CD14-positive monocyte (primary cell): ENCODE measurements at regions of chr16 and their contacts with region 1.

Region 1: GRCh38 chr16:28140788-28141618 is 70.8 kb downstream of the XPO6 start:
- DNase-seq: peak; percentile 72 to 81 (median 80)
- H3K4me3 ChIP-seq: no peak overlapping the region
- H3K4me3 Mint-ChIP-seq: peak overlapping the region; percentile 41 to 48
- H3K27ac ChIP-seq: peak overlapping the region; percentile 81 to 84
- H3K27ac Mint-ChIP-seq: peak overlapping the region; percentile 87 to 97 (median 94)
- H3K4me1 ChIP-seq: peaks cover 51 to 60% of the 10 kb centered on the region in 2 donors
- H3K4me1 Mint-ChIP-seq: peaks cover 58% of the 10 kb centered on the region
- H3K27me3 ChIP-seq: no peaks in the 10 kb centered on the region
- H3K27me3 Mint-ChIP-seq: no peaks in the 10 kb centered on the region
- CTCF ChIP-seq: no peak

Region 2: GRCh38 chr16:28188085-28188916 is 47.3 kb after region 1 on chr16:
- intact Hi-C with region 1: loop called in 1 of 2 experiments (anchors 5 kb)
- DNase-seq: peak; percentile 74 to 85 (median 83)
- H3K4me3 ChIP-seq: peak overlapping the region; percentile 14 to 68 (median 40)
- H3K4me3 Mint-ChIP-seq: peak overlapping the region; percentile 67 to 86
- H3K27ac ChIP-seq: peak overlapping the region; percentile 91
- H3K27ac Mint-ChIP-seq: peak overlapping the region; percentile 92 to 98 (median 97)
- H3K4me1 ChIP-seq: peaks cover 51 to 63% of the 10 kb centered on the region in 2 donors
- H3K4me1 Mint-ChIP-seq: peaks cover 74% of the 10 kb centered on the region
- H3K27me3 ChIP-seq: no peaks in the 10 kb centered on the region
- H3K27me3 Mint-ChIP-seq: peaks cover 0 to 3% (median 0%) of the 10 kb centered on the region in 3 donors
- CTCF ChIP-seq: no peak